ENCODE measurements at regions of chr5 and their contacts with region 1.

Region 1: GRCh38 chr5:53335115-53335514 is 145.3 kb upstream of the FST start:
- DNase-seq: peak; percentile 50
- H3K4me3 ChIP-seq: no peak overlapping the region
- H3K27ac ChIP-seq: peak overlapping the region; percentile 100
- H3K4me1 ChIP-seq: peaks cover 87% of the 10 kb centered on the region
- H3K27me3 ChIP-seq: no peaks in the 10 kb centered on the region
- CTCF ChIP-seq: peak; percentile 19 to 40

Region 2: GRCh38 chr5:53123702-53124101 is 211.4 kb before region 1 on chr5:
- CTCF ChIA-PET with region 1: no interaction called
- dilution Hi-C with region 1: no loop called
- in situ Hi-C with region 1: no loop called
- intact Hi-C with region 1: loop called (anchors 5 kb)
- DNase-seq: no peak
- H3K4me3 ChIP-seq: no peak overlapping the region
- H3K27ac ChIP-seq: no peak overlapping the region
- H3K4me1 ChIP-seq: peaks cover 12% of the 10 kb centered on the region
- H3K27me3 ChIP-seq: no peaks in the 10 kb centered on the region
- CTCF ChIP-seq: peak in 1 of 2 donors; percentile 20

Region 3: GRCh38 chr5:53262348-53262970 is 72.7 kb before region 1 on chr5:
- CTCF ChIA-PET with region 1: no interaction called
- dilution Hi-C with region 1: loop called (anchors 5 kb)
- in situ Hi-C with region 1: no loop called
- intact Hi-C with region 1: loop called (anchors 1 kb)
- DNase-seq: peak; percentile 60
- H3K4me3 ChIP-seq: no peak overlapping the region
- H3K27ac ChIP-seq: peak overlapping the region; percentile 48
- H3K4me1 ChIP-seq: peaks cover 44% of the 10 kb centered on the region
- H3K27me3 ChIP-seq: no peaks in the 10 kb centered on the region
- CTCF ChIP-seq: peak; percentile 63 to 68

Region 4: GRCh38 chr5:53318303-53318702 is 16.8 kb before region 1 on chr5:
- CTCF ChIA-PET with region 1: interaction called, 5 read pairs
- dilution Hi-C with region 1: no loop called
- in situ Hi-C with region 1: no loop called
- intact Hi-C with region 1: loop called (anchors 1 kb)
- DNase-seq: peak; percentile 49
- H3K4me3 ChIP-seq: no peak overlapping the region
- H3K27ac ChIP-seq: peak overlapping the region; percentile 99
- H3K4me1 ChIP-seq: peaks cover 50% of the 10 kb centered on the region
- H3K27me3 ChIP-seq: no peaks in the 10 kb centered on the region
- CTCF ChIP-seq: peak; percentile 35 to 61

Region 5: GRCh38 chr5:53351371-53351770 is 16.3 kb after region 1 on chr5:
- CTCF ChIA-PET with region 1: no interaction called
- dilution Hi-C with region 1: no loop called
- in situ Hi-C with region 1: no loop called
- intact Hi-C with region 1: no loop called
- DNase-seq: no peak
- H3K4me3 ChIP-seq: no peak overlapping the region
- H3K27ac ChIP-seq: no peak overlapping the region
- H3K4me1 ChIP-seq: peaks cover 26% of the 10 kb centered on the region
- H3K27me3 ChIP-seq: no peaks in the 10 kb centered on the region
- CTCF ChIP-seq: no peak

Region 6: DNA sequence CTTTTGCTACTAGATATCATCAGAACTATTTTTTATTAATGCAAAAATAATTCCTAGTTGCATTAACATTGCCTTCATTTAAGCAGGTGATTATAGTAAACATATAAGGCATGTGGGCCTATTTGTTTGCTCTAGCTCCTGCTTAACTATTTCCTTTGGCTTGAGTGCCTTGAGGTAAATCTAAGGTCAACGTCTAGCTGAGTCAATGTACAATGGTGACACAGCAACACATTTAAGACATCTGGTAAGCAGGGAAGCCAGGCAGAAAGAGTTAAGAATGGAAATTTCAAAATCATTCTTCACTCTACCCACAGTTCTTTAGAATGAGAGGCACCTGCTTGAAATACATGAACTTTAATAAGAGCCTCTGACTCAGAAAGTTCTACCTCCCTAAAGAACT is 33.4 kb after region 1 on chr5:
- CTCF ChIA-PET with region 1: no interaction called
- dilution Hi-C with region 1: loop called (anchors 5 kb)
- in situ Hi-C with region 1: no loop called
- intact Hi-C with region 1: no loop called
- DNase-seq: peak; percentile 69
- H3K4me3 ChIP-seq: no peak overlapping the region
- H3K27ac ChIP-seq: peak overlapping the region; percentile 44
- H3K4me1 ChIP-seq: peaks cover 35% of the 10 kb centered on the region
- H3K27me3 ChIP-seq: no peaks in the 10 kb centered on the region
- CTCF ChIP-seq: no peak

Region 7: GRCh38 chr5:54217826-54218503 is 882.9 kb after region 1 on chr5:
- CTCF ChIA-PET with region 1: no interaction called
- dilution Hi-C with region 1: no loop called
- in situ Hi-C with region 1: no loop called
- intact Hi-C with region 1: loop called (anchors 1 kb)
- DNase-seq: peak; percentile 42
- H3K4me3 ChIP-seq: no peak overlapping the region
- H3K27ac ChIP-seq: no peak overlapping the region
- H3K4me1 ChIP-seq: no peaks in the 10 kb centered on the region
- H3K27me3 ChIP-seq: no peaks in the 10 kb centered on the region
- CTCF ChIP-seq: peak; percentile 82 to 83

Measured in mammary epithelial cell (primary cell).